ENCODE measurements at regions of chr22 and their contacts with region 1.

Region 1: DNA sequence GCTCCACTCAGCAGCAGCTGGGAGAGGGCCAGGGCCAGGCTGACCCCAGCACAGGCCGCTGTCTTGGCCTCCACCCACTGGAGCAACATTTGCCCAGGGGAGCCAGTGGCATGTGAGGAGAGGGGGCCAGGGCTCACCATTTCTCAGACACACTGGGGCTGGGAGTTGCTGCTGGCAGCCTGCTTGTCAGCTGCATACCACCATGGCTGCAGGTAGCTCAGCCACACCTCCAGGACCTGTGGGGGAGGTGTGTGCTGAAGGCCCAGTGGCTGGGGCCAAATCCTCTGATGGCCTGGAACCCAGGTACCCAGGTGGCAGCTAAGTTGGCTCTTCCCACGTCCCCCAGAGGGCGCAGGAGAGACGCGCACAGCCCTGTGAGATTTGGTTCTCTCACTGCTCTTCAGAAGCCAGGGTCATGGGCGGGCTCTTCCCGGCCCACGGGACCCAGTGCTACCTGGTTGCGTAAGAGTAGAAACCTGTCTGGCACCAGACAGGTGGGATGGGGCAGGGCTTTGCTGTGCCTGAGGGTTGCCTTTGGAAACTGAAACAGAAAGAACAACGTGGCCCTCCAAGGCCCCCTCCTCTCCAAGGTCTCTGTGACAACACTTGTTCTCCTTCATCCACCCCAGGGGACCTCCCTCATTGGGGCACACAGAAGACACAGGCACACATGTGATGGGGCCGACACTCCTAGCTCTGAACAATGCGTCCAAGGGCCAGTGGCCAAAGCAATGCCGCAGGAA is 98.8 kb downstream of the MED15 start:
- H3K4me3 ChIP-seq: no peak overlapping the region
- H3K27ac ChIP-seq: no peak overlapping the region
- H3K4me1 ChIP-seq: no peaks in the 10 kb centered on the region
- CTCF ChIP-seq: peak; percentile 89

Region 2: GRCh38 chr22:20646415-20646814 is 40.2 kb after region 1 on chr22:
- CTCF ChIA-PET with region 1: interaction called, 10 read pairs
- POLR2A ChIA-PET with region 1: interaction called, 4 read pairs
- H3K4me3 ChIP-seq: no peak overlapping the region
- H3K27ac ChIP-seq: no peak overlapping the region
- H3K4me1 ChIP-seq: no peaks in the 10 kb centered on the region
- CTCF ChIP-seq: no peak

Region 3: GRCh38 chr22:20741634-20742581 is 135.7 kb after region 1 on chr22:
- CTCF ChIA-PET with region 1: interaction called, 11 read pairs
- POLR2A ChIA-PET with region 1: no interaction called
- H3K4me3 ChIP-seq: no peak overlapping the region
- H3K27ac ChIP-seq: no peak overlapping the region
- H3K4me1 ChIP-seq: no peaks in the 10 kb centered on the region
- CTCF ChIP-seq: no peak